Cardiac septum (tissue), 1 donor: ENCODE measurements at regions of chr19 and their contacts with region 1.

Region 1: GRCh38 chr19:9584073-9584833 is at the start of gene ZNF121:
- DNase-seq: peak; percentile 93
- total RNA-seq, gene ZNF121: 23.5 TPM

Region 2: DNA sequence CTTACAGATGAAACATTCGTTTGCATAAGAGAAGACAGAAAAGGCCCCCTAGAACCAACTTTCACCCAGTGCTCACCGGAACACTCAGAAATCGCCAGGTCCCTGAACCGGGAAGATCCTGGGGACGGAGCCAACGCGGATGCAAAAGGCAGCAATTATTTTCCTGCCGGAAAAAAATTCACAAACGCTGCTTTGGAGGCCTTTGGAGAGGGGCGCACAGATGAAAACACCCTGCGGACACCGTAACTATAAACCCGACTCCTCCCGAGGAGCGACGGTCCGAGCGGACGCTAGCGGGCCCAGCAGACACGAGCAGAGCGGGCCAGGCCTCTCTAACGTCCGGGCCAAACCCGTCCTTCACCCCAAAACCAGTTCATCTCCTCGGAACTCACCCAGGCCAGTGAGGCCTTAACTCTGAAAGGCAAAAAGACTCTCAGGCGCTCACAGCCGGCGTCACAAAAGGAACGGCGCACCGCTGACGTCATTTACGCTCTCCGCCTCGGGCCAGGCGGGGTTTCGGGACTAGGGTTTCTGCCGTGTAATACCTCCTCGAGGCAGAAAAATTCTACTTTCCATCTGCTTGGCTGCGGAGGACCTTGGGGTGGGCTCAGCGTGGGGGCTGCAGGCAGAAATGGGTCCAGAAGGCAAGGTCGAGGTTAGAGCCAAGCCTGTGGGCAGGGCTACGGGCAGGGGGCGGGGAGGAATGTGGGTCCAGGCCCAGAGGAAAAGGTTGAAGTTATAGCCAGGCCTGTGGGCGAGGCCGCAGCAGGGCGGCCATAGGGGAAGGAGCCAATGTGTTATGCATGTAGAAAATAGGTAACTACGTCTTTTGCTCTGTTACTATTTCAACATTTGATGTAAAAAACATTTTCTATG is 45.8 kb before region 1 on chr19 and contains the start of gene ZNF426:
- intact Hi-C with region 1: loop called (anchors 5 kb)
- DNase-seq: peak; percentile 95
- total RNA-seq, gene ZNF426: 14.8 TPM

Region 3: DNA sequence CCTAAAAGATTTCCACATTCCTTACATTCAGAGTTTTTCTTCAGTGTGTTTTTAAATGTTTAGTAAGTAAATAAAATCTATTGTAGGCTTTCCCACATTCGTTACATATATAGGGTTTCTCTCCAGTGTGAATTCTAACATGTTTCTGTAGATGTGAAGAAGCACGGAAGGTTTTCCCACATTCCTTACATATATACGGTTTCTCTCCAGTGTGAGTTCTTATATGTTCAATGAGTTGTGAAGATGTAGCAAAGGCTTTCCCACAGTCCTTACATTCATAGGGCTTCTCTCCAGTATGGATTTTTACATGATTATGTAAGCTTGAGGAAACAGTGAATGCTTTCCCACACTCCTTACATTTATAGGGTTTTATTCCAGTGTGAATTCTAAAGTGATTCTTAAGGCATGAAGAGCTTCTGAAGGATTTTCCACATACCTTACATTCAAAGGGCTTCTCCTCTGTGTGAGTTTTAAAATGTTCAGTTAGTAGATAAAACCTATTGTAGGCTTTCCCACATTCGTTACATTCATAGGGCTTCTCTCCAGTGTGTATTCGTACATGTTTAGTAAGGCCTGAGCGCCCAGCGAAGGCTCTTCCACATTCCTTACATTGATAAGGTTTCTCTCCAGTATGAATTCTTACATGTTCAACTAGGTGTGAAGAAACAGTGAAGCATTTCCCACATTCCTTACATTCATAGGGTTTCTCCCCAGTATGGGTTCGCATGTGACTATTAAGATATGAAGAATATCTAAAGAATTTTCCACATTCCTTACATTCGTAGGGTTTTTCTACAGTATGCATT is 18.1 kb before region 1 on chr19:
- intact Hi-C with region 1: no loop called
- DNase-seq: no peak

Region 4: DNA sequence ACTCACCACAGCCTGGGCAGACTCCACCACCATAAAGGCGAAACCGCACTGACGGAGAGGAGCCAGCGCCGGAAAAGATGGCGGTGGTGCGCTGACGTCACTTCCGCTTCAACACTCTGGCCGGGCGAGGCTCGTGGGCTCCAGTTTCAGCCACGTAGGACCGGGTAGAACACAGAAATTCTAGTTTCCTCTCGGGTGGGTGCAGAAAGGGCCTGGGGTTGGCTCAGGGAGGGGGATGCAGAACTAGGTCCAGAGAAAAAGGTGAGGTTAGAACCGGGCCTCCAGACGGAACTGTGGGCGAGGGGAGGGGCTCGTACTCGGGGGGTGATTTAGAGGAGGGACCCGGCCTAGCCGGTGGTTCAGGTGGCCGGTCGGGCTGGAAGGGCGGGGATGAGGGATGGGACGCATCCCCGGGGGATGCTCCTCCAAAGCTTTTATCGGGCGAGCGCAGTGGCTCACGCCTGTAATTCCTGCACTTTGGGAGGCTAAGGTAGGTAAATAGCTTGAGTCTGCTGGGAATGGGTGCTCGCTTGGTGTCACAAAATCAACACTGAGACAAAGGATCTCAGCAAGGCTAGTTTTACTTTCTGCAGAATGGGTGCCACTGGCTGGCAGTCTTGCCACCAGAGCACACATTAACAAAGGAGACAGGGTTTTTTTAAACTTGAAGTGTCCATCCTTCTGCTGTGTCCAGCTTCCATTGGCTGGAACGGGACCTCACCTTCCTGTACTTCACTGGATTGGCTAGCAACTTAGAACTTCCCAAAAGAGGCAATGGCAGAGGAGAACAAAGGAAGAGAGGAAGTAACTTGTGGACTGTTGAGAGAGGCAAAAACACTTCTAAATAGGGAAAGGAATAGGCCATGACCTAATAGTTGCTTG is 37.1 kb after region 1 on chr19 and contains the start of gene ZNF561:
- intact Hi-C with region 1: loop called (anchors 2 kb)
- DNase-seq: peak; percentile 94
- total RNA-seq, gene ZNF561: 27.4 TPM